Motor neuron (in vitro differentiated cells): ENCODE measurements at regions of chr16 and their contacts with region 1.

Region 1: GRCh38 chr16:28063641-28064061 is at the start of gene GSG1L:
- ATAC-seq: peak in 7 of 8 experiments; percentile 17 to 89 (median 81)
- H3K4me3 ChIP-seq: peak within 1 kb of the TSS; percentile 29 to 49 (median 41)
- H3K27ac ChIP-seq: no peak within 1 kb of the TSS
- H3K4me1 ChIP-seq: peaks cover 0 to 3% of the 10 kb centered on the region in 2 donors
- total RNA-seq, gene GSG1L: 0.25 to 1.5 (median 0.74) TPM

Region 2: DNA sequence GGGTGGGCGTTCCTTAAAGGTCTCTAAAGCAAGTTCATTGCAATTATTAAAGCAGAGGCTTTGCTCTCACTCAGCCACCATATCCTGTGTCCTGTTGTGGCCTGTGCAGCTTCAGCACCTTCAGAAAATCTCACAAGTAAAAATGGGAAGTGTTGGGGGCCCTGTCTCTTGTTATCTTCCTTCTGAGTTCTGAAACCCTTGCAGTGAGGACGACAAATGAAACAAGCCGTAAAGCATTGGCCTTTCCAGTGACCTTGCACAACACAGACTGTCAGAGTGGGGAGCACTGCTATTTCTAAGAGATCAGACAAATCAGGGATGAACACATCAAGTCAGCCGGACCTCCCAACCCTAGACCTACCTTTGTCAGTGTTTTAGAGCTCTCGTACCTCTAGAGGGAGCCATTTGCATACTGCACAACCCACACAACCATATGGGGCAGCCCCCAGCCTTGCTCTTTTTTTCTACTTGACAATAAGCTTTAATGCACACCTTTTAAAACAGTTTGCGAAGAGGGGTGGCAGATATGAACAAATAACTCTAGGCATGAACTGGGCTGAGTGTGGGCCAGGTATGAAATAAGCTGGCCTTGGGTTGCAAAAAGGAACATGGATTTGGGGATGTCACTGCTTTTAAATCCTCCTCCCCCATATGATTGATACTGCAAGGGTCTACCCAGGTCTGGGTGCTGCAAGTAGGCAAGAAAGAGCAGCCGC is 423.9 kb before region 1 on chr16:
- in situ Hi-C with region 1: loop called in 1 of 9 experiments (anchors 25 kb)
- ATAC-seq: peak; percentile 83 to 95 (median 90)
- H3K4me3 ChIP-seq: no peak overlapping the region
- H3K27ac ChIP-seq: peak overlapping the region; percentile 36 to 60
- H3K4me1 ChIP-seq: peaks cover 16 to 30% of the 10 kb centered on the region in 2 donors

Region 3: GRCh38 chr16:27795992-27796614 is 267.5 kb before region 1 on chr16:
- in situ Hi-C with region 1: loop called in 1 of 9 experiments (anchors 25 kb)
- ATAC-seq: peak in 4 of 8 experiments; percentile 46 to 74 (median 64)
- H3K4me3 ChIP-seq: no peak overlapping the region
- H3K27ac ChIP-seq: no peak overlapping the region
- H3K4me1 ChIP-seq: no peaks in the 10 kb centered on the region

Region 4: DNA sequence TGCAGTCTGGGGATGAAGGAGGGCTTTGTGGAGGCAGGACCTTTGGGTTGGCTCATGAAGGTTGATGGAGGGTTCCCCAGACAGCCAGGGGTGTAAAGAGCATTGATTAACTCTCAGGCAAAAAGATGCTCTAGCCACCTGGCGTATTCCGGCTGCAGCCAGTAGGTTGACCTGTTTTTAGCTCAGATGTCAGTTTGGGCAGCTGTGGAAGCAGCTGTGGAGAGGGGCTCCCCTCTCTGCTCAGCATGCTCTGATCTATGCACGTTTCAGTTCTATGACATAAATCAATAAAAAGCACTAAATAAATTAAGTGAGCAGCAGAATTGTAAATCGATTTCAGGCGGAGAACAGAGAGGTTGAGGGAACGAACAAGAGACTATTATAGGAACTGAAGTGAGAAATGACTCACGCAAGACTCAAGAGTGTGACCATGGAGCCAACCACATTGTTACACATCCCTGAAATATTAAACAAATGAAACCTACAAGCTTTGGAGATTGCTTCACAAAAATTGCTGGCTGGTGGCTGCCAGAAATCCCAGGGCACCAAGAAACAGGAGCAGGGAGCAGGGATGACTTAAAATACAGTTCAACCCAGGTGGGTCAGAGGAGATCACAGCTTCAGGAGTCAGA is 112.0 kb before region 1 on chr16:
- in situ Hi-C with region 1: no loop called
- ATAC-seq: peak in 5 of 8 experiments; percentile 55 to 97 (median 84)
- H3K4me3 ChIP-seq: no peak overlapping the region
- H3K27ac ChIP-seq: peak overlapping the region in 1 of 2 donors; percentile 60
- H3K4me1 ChIP-seq: peaks cover 2 to 8% of the 10 kb centered on the region in 2 donors

Region 5: GRCh38 chr16:27972500-27972899 is 91.2 kb before region 1 on chr16:
- in situ Hi-C with region 1: loop called in 2 of 9 experiments (anchors 10 kb)
- ATAC-seq: peak in 3 of 8 experiments; percentile 71 to 87 (median 83)
- H3K4me3 ChIP-seq: no peak overlapping the region
- H3K27ac ChIP-seq: no peak overlapping the region
- H3K4me1 ChIP-seq: no peaks in the 10 kb centered on the region

Region 6: DNA sequence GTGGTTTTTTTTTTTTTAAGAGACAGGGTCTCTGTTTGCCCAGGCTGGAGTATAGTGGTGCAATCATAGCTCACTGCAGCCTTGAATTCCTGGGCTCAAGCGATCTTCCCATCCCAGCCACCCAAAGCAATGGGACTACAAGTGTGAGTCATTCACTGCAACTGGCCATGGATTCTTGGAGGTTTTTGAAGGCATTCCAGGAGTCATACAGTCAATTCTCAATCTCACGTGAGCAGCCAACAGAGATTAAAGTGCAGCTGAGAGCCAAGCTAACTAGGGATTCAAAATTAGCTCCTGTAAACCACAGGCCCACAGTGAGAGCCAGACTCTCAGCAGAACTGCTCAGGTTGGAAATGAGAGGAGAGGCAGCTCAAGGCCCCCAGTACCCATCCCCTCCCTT is 117.9 kb after region 1 on chr16:
- in situ Hi-C with region 1: no loop called
- ATAC-seq: peak in 7 of 8 experiments; percentile 47 to 93 (median 63)
- H3K4me3 ChIP-seq: no peak overlapping the region
- H3K27ac ChIP-seq: no peak overlapping the region
- H3K4me1 ChIP-seq: peaks cover 9 to 14% of the 10 kb centered on the region in 2 donors